ENCODE measurements at regions of chr2 and their contacts with region 1.

Region 1: GRCh38 chr2:95121407-95122196 is at the start of gene MRPS5:
- DNase-seq: peak; percentile 65 to 87 (median 79)
- ATAC-seq: peak; percentile 91
- H3K4me3 Mint-ChIP-seq: peak within 1 kb of the TSS; percentile 89 to 98 (median 96)
- H3K27ac Mint-ChIP-seq: peak within 1 kb of the TSS; percentile 92 to 97 (median 95)
- H3K4me1 Mint-ChIP-seq: peaks cover 16 to 53% (median 48%) of the 10 kb centered on the region in 4 donors
- H3K27me3 Mint-ChIP-seq: peaks cover 0 to 2% (median 0%) of the 10 kb centered on the region in 5 donors
- polyA plus RNA-seq, gene MRPS5: 37.2 to 54.6 (median 43.0) TPM

Region 2: GRCh38 chr2:95062242-95063085 is 59.1 kb before region 1 on chr2:
- POLR2A ChIA-PET with region 1: no interaction called
- DNase-seq: no peak
- ATAC-seq: peak; percentile 42 to 50
- H3K4me3 Mint-ChIP-seq: peak overlapping the region; percentile 20 to 77 (median 59)
- H3K27ac Mint-ChIP-seq: peak overlapping the region; percentile 66 to 96 (median 84)
- H3K4me1 Mint-ChIP-seq: peaks cover 24 to 40% (median 32%) of the 10 kb centered on the region in 4 donors
- H3K27me3 Mint-ChIP-seq: no peaks in the 10 kb centered on the region

Region 3: DNA sequence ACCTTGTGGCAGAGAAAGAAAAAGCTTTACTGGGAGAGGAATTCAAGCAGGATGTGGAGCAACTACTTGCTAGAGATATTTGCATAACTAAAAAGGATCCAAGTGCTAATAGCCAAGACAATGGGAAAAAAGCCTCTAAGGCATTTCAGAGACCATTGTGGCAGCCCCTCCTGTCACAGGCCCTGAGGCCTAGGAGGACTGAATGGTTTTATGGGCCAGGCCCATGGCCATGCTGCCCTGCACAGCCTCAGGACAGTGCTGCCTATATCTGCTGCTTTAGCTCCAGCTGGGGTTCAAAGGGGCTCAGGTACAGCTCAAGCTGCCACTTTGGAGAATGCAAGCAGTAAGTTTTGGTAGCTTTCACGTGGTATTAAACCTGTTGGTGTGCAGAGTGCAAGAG is 17.1 kb after region 1 on chr2:
- POLR2A ChIA-PET with region 1: no interaction called
- DNase-seq: no peak
- ATAC-seq: no peak
- H3K4me3 Mint-ChIP-seq: no peak overlapping the region
- H3K27ac Mint-ChIP-seq: no peak overlapping the region
- H3K4me1 Mint-ChIP-seq: no peaks in the 10 kb centered on the region
- H3K27me3 Mint-ChIP-seq: no peaks in the 10 kb centered on the region

Region 4: DNA sequence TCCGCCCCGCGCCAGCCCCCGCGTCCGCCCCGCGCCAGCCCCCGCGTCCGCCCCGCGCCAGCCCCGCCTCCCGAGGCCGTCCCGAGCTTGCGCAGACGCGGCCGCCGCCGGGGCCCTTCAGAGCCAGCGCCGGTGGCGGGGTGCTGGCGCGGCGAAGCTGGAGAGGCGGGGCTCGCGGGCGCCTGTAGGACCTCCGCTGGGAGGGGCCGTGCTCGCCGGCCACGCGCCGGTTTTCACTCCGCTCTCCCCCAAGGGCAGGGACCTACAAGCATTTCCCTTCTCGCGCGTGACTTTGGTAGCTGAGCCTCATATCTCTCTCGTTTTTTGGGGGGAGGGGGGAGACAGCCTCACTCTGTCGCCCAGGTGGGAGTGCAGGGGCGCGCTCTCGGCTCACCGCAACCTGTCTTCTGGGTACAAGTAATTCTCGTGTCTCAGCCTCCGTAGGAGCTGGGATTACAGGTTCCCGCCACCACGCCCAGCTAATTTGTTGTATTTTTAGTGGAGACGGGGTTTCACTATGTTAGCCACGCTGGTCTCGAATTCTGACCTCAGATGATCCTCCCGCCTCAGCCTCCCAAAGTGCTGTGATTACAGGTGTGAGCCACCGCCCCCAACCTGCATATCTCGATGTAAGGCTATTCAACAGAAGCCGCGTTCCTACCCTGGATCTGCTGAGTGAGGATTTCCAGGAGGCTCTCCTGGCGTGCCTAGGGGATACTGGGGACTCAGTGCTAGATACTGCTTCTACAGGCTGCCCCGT is 38.3 kb after region 1 on chr2 and contains the start of gene ZNF514:
- POLR2A ChIA-PET with region 1: interaction called, 42 read pairs
- DNase-seq: peak; percentile 69 to 81 (median 76)
- ATAC-seq: peak; percentile 84 to 88
- H3K4me3 Mint-ChIP-seq: peak within 1 kb of the TSS; percentile 86 to 95 (median 90)
- H3K27ac Mint-ChIP-seq: peak within 1 kb of the TSS; percentile 84 to 94 (median 92)
- H3K4me1 Mint-ChIP-seq: peaks cover 3 to 32% (median 29%) of the 10 kb centered on the region in 4 donors
- H3K27me3 Mint-ChIP-seq: no peaks in the 10 kb centered on the region
- polyA plus RNA-seq, gene ZNF514: 10.0 to 11.2 (median 10.3) TPM

Region 5: GRCh38 chr2:95165129-95166064 is 43.8 kb after region 1 on chr2 and contains the start of gene ZNF2:
- POLR2A ChIA-PET with region 1: interaction called, 42 read pairs
- DNase-seq: peak; percentile 95 to 99 (median 96)
- ATAC-seq: peak; percentile 93 to 95
- H3K4me3 Mint-ChIP-seq: peak within 1 kb of the TSS; percentile 97 to 100 (median 100)
- H3K27ac Mint-ChIP-seq: peak within 1 kb of the TSS; percentile 97 to 99 (median 98)
- H3K4me1 Mint-ChIP-seq: peaks cover 13 to 53% (median 39%) of the 10 kb centered on the region in 4 donors
- H3K27me3 Mint-ChIP-seq: no peaks in the 10 kb centered on the region
- polyA plus RNA-seq, gene ZNF2: 2.5 to 4.2 (median 3.6) TPM

Region 6: DNA sequence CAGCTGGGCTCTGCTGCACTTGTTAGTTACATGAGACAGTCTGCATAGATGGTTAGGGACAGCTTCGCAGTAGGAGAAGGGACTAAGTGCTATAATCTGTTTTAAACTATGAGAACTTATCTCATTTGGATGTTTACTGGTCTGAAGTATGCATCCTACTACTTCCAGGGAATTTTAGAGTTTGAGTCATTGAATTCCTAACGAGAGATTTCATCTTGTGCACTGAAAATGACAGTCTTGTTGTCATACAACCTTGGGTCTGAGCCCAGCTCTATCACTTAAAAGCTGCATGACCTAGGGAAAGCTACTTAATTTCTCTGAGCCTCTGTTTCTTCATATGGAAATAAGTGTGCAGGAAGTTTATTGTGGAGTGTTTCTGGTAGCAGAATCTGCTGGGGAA is 548.6 kb after region 1 on chr2:
- POLR2A ChIA-PET with region 1: no interaction called
- DNase-seq: no peak
- ATAC-seq: no peak
- H3K4me3 Mint-ChIP-seq: no peak overlapping the region
- H3K27ac Mint-ChIP-seq: peak overlapping the region in 1 of 10 donors; percentile 13
- H3K4me1 Mint-ChIP-seq: peaks cover 8 to 24% (median 13%) of the 10 kb centered on the region in 4 donors
- H3K27me3 Mint-ChIP-seq: peaks cover 0 to 10% (median 0%) of the 10 kb centered on the region in 5 donors

Measured in naive thymus-derived CD8-positive, alpha-beta T cell (primary cell).